Activated CD8-positive, alpha-beta T cell treated with anti-CD3 and anti-CD28 coated beads for 36 hours (primary cell): ENCODE measurements at regions of chr12 and their contacts with region 1.

Region 1: DNA sequence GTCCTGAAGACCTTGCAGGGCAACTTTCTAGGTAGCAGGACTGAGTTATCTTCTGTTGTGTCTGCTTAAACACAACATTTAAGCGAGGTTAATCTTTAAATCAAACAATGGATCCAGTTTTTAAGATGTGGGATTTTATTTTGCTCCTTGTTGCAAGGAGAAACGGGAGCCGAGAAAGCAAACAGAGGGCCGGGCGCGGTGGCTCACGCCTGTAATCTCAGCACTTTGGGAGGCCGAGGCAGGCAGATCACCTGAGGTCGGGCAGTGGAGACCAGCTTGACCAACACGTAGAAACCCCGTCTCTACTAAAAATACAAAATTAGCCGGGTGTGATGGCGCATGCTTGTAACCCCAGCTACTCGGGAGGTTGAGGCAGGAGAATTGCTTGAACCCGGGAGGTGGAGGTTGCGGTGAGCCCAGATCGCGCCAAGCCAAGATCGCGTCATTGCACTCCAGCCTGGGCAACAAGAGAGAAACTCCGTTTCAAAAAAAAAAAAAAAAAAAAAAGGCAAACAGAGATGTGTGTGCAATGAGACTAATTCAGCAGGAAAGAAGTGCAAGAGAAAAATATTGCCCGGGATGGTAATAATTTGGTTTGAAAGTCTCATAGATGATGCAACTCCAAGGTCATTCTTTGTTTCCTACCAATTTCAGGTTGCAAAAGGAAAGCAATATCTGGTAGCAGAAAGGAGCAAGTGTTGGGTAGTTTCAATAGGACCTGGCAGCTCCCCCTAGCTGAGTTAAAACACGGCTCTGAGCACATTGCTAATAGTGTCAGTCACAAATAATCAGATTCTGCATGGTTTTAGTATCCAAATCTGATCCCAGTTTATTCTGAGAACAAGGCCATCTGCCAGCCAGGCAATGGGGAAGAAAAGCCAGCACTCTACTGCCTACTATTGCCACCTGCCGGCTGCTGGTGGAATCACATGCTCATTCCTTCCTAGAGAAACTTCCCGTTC is 141.4 kb downstream of the PPM1H start:
- DNase-seq: peak; percentile 83
- ATAC-seq: peak; percentile 78
- H3K4me3 Mint-ChIP-seq: no peak overlapping the region
- H3K27ac Mint-ChIP-seq: no peak overlapping the region
- H3K4me1 Mint-ChIP-seq: no peaks in the 10 kb centered on the region
- H3K27me3 Mint-ChIP-seq: peaks cover 7% of the 10 kb centered on the region
- CTCF ChIP-seq: peak; percentile 96

Region 2: DNA sequence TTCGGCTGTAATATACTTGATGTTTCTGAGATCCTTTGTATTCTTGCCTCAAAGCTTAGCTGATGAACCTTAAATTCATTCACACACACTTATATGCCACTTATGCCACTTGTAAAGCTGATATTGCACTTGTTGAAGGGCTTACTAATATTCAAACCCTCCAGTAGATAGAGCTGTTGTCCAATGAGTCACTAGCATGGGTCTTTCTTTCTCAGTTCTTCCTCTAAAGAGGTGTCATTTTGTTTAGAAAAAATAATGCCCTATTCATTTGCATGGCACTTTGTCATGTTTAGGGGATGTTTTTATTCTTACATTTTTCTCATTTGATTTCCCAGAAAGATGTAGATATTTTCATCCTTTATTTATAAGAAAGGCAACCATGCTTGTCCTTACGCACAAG is 270.6 kb before region 1 on chr12:
- CTCF ChIA-PET with region 1: interaction called, 15 read pairs
- POLR2A ChIA-PET with region 1: no interaction called
- intact Hi-C with region 1: no loop called
- DNase-seq: no peak
- ATAC-seq: peak; percentile 84
- H3K4me3 Mint-ChIP-seq: no peak overlapping the region
- H3K27ac Mint-ChIP-seq: no peak overlapping the region
- H3K4me1 Mint-ChIP-seq: peaks cover 26% of the 10 kb centered on the region
- H3K27me3 Mint-ChIP-seq: no peaks in the 10 kb centered on the region
- CTCF ChIP-seq: no peak

Region 3: DNA sequence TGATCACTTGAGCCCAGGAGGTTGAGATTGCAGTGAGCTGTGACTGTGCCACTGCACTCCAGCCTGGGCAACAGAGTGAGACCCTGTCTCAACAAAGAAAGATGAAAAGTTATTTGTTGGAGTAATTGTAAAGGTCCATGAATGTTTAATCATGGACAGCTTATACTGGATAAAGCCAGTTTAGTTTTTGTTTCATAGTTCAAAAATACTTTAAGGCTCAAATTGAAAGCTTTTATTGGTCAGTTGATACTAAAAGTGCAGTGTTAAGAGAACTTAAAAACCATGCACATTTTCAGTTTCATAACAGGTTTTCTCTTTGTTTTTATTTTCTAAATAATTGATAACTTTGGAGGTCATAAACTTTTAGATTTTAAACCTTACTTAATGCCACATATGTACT is 218.5 kb before region 1 on chr12:
- CTCF ChIA-PET with region 1: interaction called, 123 read pairs
- POLR2A ChIA-PET with region 1: no interaction called
- intact Hi-C with region 1: loop called (anchors 2 kb)
- DNase-seq: no peak
- ATAC-seq: no peak
- H3K4me3 Mint-ChIP-seq: no peak overlapping the region
- H3K27ac Mint-ChIP-seq: no peak overlapping the region
- H3K4me1 Mint-ChIP-seq: peaks cover 2% of the 10 kb centered on the region
- H3K27me3 Mint-ChIP-seq: no peaks in the 10 kb centered on the region
- CTCF ChIP-seq: no peak

Region 4: GRCh38 chr12:62581288-62582064 is 212.1 kb before region 1 on chr12:
- CTCF ChIA-PET with region 1: interaction called, 123 read pairs
- POLR2A ChIA-PET with region 1: no interaction called
- intact Hi-C with region 1: loop called (anchors 2 kb)
- DNase-seq: no peak
- ATAC-seq: peak; percentile 65
- H3K4me3 Mint-ChIP-seq: no peak overlapping the region
- H3K27ac Mint-ChIP-seq: no peak overlapping the region
- H3K4me1 Mint-ChIP-seq: no peaks in the 10 kb centered on the region
- H3K27me3 Mint-ChIP-seq: no peaks in the 10 kb centered on the region
- CTCF ChIP-seq: peak; percentile 68

Region 5: GRCh38 chr12:62603061-62603810 is 190.3 kb before region 1 on chr12:
- CTCF ChIA-PET with region 1: interaction called, 15 read pairs
- POLR2A ChIA-PET with region 1: interaction called, 3 read pairs
- intact Hi-C with region 1: loop called (anchors 5 kb)
- DNase-seq: peak; percentile 81
- ATAC-seq: peak; percentile 77
- H3K4me3 Mint-ChIP-seq: peak overlapping the region; percentile 95
- H3K27ac Mint-ChIP-seq: peak overlapping the region; percentile 98
- H3K4me1 Mint-ChIP-seq: peaks cover 39% of the 10 kb centered on the region
- H3K27me3 Mint-ChIP-seq: no peaks in the 10 kb centered on the region
- CTCF ChIP-seq: peak; percentile 56

Region 6: GRCh38 chr12:62621101-62621638 is 172.4 kb before region 1 on chr12:
- CTCF ChIA-PET with region 1: interaction called, 11 read pairs
- POLR2A ChIA-PET with region 1: no interaction called
- intact Hi-C with region 1: no loop called
- DNase-seq: no peak
- ATAC-seq: no peak
- H3K4me3 Mint-ChIP-seq: no peak overlapping the region
- H3K27ac Mint-ChIP-seq: no peak overlapping the region
- H3K4me1 Mint-ChIP-seq: peaks cover 7% of the 10 kb centered on the region
- H3K27me3 Mint-ChIP-seq: peaks cover 7% of the 10 kb centered on the region
- CTCF ChIP-seq: no peak

Region 7: DNA sequence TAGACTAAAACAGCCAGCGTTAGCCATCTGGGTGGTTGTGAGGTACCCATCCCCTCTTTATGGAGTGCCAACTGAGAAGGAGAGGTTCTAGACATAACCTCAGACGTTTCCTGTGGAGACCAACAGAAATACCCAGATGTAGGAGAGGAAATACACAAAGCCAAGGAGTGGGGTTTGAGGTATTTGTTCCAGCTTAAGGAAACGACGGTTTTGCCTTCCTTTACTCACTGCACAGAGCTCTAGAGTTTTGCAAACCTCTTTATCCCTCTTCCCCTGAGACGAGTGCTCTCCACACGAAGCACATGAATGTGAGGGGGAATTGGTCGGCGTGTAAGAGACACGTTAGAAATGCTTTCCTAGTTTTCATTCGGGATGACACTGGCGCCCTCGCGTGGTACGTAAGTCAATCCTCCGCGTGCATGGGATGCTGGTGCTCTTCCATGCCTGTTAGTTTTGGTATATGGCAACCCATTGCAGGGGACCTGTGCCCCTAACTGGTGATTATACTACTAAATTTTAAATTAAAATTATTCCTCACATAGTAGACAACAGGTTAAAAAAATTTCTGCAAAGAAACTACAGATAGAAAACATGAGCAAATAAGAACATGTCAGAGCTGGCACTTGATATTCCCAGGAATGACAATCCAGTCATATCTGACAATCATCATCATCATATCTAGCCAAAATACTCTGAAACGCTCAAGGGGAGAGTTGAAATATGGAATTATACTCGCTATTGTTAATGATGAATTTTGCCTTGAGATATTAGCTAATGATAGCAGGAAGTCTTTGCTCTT is 19.7 kb after region 1 on chr12:
- CTCF ChIA-PET with region 1: interaction called, 25 read pairs
- POLR2A ChIA-PET with region 1: no interaction called
- intact Hi-C with region 1: no loop called
- DNase-seq: peak; percentile 63
- ATAC-seq: peak; percentile 22
- H3K4me3 Mint-ChIP-seq: peak overlapping the region; percentile 23
- H3K27ac Mint-ChIP-seq: no peak overlapping the region
- H3K4me1 Mint-ChIP-seq: peaks cover 16% of the 10 kb centered on the region
- H3K27me3 Mint-ChIP-seq: peaks cover 15% of the 10 kb centered on the region
- CTCF ChIP-seq: peak; percentile 58